HEK293 (cell line): ENCODE measurements at regions of chr11 and their contacts with region 1.

Region 1: DNA sequence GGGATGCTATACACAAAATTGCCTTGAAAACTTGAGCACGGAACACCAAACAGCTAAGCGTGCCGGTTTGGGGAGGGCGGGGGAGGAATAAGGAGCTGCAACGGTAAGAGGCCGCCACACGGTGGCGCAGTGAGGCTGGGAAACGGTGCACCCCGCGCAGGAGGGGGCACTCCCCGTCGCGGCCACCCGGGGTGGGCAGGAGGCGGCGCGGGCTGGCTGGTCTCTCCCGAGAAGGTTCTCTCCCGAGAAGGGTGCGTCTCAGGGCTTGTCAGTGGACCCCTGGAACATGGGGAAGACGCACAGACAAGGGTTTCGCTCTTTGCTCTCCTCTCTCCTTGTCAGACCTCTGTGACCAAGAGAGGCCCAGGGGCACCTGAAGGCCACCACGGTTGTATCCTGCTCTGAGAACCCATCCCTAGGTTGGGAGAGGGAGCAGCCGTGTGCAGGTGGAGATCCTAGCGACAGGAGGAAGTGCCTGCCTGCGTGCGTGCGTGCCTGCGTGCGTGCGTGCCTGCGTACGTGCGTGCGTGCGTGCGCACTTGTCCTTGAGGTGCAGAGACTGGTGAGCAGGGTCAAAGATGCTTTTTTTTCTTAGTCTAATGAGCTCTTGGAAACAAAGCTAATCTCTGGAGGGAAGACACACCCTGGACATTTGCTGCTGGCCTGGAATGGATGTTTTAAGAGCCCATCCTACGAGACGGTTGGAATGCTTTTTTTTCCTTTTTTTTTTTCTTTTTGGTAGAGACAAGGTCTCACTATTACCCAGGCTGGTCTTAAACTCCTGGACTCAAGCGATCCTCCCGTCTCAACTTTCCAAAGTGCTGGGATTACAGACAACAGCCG is 18.1 kb upstream of the JAM3 start:
- H3K4me3 ChIP-seq: peak overlapping the region; percentile 22
- H3K27ac ChIP-seq: no peak overlapping the region
- H3K4me1 ChIP-seq: no peaks in the 10 kb centered on the region
- CTCF ChIP-seq: peak; percentile 88

Region 2: GRCh38 chr11:133947321-133947756 is 103.4 kb before region 1 on chr11:
- CTCF ChIA-PET with region 1: interaction called, 10 read pairs
- POLR2A ChIA-PET with region 1: no interaction called
- H3K4me3 ChIP-seq: no peak overlapping the region
- H3K27ac ChIP-seq: no peak overlapping the region
- H3K4me1 ChIP-seq: peaks cover 14% of the 10 kb centered on the region
- CTCF ChIP-seq: peak; percentile 59

Region 3: GRCh38 chr11:134040386-134041302 is 10.1 kb before region 1 on chr11:
- CTCF ChIA-PET with region 1: interaction called, 21 read pairs
- POLR2A ChIA-PET with region 1: interaction called, 6 read pairs
- H3K4me3 ChIP-seq: no peak overlapping the region
- H3K27ac ChIP-seq: no peak overlapping the region
- H3K4me1 ChIP-seq: no peaks in the 10 kb centered on the region
- CTCF ChIP-seq: no peak

Region 4: GRCh38 chr11:134086376-134086775 is 35.6 kb after region 1 on chr11:
- CTCF ChIA-PET with region 1: interaction called, 10 read pairs
- POLR2A ChIA-PET with region 1: no interaction called
- H3K4me3 ChIP-seq: no peak overlapping the region
- H3K27ac ChIP-seq: no peak overlapping the region
- H3K4me1 ChIP-seq: no peaks in the 10 kb centered on the region
- CTCF ChIP-seq: no peak

Region 5: DNA sequence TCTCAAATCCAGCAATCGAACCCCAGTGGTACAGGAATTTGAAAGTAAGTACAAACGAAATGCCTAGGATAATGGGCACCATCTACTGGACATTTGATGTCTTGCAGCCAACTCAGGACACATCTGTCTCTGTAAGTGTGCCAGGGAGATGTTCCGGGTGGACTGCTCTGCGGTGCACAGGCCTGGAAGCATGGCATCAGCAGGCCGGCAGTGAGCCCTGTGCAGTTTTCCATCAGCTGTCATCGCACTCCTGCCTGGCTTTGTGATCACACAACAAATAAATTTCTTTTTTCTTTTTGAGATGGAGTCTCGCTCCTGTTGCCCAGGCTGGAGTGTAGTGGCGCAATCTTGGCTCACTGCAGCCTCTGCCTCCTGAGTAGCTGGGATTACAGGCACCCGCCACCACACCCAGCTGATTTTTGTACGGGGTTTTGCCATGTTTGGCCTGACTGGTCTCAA is 89.1 kb after region 1 on chr11:
- CTCF ChIA-PET with region 1: interaction called, 44 read pairs
- POLR2A ChIA-PET with region 1: no interaction called
- H3K4me3 ChIP-seq: no peak overlapping the region
- H3K27ac ChIP-seq: no peak overlapping the region
- H3K4me1 ChIP-seq: no peaks in the 10 kb centered on the region
- CTCF ChIP-seq: 0 out of 2 replicates have a peak, but pooled peaks have one; percentile 45

Region 6: DNA sequence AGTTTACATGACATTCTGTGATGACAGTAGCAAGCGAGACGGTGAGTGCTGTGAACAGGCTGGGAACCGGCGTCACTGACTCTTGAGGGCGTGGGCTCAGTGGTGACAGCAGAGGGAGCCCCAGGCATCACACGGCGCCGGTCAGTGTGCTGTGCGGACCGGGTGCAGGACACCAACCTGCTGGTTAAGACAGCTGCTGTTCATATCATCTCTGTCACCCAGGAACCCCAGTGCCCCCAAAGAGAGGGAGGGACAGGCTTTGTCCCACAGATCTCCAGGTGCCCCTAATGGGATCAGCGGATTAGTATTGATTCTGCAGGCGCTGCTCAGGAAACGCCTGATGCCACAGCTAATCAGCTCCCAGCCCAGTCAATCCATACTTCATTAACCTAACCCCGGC is 342.9 kb after region 1 on chr11:
- CTCF ChIA-PET with region 1: no interaction called
- POLR2A ChIA-PET with region 1: no interaction called
- H3K4me3 ChIP-seq: no peak overlapping the region
- H3K27ac ChIP-seq: no peak overlapping the region
- H3K4me1 ChIP-seq: no peaks in the 10 kb centered on the region
- CTCF ChIP-seq: 0 out of 2 replicates have a peak, but pooled peaks have one; percentile 14